Activated CD4-positive, alpha-beta T cell treated with anti-CD3 and anti-CD28 coated beads for 36 hours (primary cell): ENCODE measurements at regions of chr11 and their contacts with region 1.

Region 1: DNA sequence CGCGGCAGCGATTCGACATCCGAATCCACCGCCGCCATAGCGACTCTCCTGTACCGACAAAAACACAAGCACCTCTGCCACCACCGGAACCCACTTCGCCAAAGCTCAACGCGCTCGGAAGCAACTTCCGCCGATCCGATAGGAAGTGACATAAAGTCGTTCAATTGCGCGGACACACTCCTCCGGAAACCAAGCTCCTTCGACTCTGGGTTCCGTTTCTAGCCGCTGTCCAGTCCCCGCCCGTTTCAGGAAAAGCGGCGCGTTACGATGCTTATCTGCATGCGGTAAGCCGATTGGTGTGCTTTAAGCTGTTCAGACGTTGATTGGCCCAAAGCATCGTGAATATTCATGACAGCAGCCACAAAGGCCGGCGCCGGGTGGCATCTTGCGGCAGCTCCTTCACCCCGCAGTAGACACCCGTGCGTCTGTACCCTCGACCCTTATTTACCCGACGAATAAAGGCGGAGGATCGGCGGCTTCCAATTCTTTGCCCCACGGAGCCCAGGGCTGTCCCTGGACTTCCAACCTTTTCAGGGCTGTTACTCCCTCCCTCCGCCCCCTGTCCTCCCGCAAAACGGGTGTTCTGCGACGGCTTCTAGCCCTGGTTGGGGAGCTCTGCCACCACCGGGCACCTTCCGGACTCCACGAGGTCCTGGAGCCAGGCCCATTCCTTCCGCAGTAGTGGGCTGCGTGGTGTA is at the start of gene TUT1:
- DNase-seq: peak; percentile 97
- ATAC-seq: peak; percentile 93
- H3K4me3 Mint-ChIP-seq: peak within 1 kb of the TSS; percentile 99
- H3K27ac Mint-ChIP-seq: peak within 1 kb of the TSS; percentile 99
- H3K4me1 Mint-ChIP-seq: peaks cover 47% of the 10 kb centered on the region
- H3K27me3 Mint-ChIP-seq: no peaks in the 10 kb centered on the region
- total RNA-seq, gene TUT1: 32.5 to 36.0 TPM

Region 2: DNA sequence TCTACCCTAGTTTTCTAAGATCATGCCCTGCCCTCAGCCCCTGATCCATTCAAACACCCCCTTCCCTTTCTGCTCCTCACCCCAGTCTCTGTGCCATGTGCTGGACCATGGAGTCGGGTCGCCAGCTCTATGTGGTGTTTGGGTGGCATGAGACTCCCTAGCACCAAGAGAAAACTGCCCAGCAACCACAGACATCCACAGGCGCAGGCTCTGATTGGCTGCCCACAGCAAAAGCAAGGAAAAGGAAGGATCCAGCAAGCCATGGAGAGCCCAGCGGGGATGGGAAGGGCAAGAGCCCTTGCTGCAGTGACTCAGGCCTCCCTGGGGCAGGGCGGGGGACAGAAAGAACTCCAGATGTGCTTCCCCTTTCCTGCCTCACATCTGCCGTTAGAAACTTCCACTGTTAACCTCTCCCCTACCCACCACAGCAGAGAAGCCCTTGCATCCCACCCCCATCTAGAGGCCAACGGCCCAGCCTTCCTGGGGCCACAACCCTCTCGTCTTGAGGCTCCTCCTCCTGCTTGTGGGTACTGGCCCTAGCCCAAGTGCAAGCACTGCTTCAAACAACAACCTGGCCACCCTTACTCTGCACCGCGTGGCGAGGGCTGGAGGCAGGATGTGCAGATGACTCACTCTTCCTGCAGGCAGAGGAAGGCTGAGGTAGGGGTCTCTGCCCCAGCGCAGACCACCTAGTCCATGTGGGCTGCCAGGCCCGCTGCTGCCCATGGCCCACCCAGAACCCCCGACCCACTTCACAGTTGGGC is 35.3 kb before region 1 on chr11:
- CTCF ChIA-PET with region 1: interaction called, 8 read pairs
- POLR2A ChIA-PET with region 1: interaction called, 15 read pairs
- intact Hi-C with region 1: no loop called
- DNase-seq: peak; percentile 92
- ATAC-seq: peak; percentile 65
- H3K4me3 Mint-ChIP-seq: peak overlapping the region; percentile 54
- H3K27ac Mint-ChIP-seq: peak overlapping the region; percentile 92
- H3K4me1 Mint-ChIP-seq: peaks cover 98% of the 10 kb centered on the region
- H3K27me3 Mint-ChIP-seq: no peaks in the 10 kb centered on the region

Region 3: DNA sequence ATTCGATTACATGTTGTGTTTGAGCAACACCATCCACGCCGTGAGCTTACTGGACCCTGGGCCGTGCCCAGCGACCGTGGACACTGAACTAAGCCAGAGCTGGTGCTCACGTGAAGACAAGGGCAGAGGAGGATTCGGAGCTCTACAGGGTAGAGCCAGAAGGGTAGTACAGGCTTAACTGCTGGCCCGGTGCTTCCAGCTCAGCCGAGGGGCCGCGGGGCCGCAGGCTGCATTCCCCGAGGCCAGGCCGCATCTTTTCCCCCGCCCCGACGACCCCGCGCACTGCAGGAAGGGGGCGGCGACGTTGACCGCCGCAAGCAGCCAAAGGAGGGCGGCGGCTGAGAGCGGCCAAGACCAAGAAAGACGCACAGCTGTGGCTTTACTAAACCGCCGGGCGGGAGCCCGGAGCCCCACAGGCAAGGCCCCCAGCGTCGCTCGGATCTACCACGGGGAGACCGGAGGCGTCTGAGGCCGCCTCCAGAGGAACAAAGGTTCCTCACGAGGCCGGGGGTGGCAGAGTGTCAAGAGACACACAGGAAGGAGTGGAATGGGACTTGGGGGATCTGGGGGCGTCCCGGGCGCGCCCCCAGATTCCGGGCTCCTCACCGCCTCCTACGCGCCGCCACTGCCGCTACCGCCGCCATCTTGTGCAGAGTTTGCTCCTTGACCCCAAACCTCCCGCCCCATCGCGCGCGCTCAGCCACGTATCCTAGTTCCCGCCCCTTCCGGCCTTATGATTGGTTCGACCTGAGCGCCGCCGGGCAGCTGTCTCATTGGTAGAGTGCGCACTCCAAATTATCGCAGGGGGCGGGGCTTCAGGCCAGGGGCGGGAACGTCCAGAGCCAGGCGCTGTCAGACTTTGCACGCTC is 54.6 kb after region 1 on chr11 and contains the start of gene GANAB:
- CTCF ChIA-PET with region 1: interaction called, 5 read pairs
- POLR2A ChIA-PET with region 1: interaction called, 13 read pairs
- intact Hi-C with region 1: loop called in 1 of 2 experiments (anchors 1 kb)
- DNase-seq: peak; percentile 100
- ATAC-seq: peak; percentile 99
- H3K4me3 Mint-ChIP-seq: peak within 1 kb of the TSS; percentile 93
- H3K27ac Mint-ChIP-seq: peak within 1 kb of the TSS; percentile 93
- H3K4me1 Mint-ChIP-seq: peaks cover 34% of the 10 kb centered on the region
- H3K27me3 Mint-ChIP-seq: no peaks in the 10 kb centered on the region
- total RNA-seq, gene GANAB: 208 to 218 TPM

Region 4: DNA sequence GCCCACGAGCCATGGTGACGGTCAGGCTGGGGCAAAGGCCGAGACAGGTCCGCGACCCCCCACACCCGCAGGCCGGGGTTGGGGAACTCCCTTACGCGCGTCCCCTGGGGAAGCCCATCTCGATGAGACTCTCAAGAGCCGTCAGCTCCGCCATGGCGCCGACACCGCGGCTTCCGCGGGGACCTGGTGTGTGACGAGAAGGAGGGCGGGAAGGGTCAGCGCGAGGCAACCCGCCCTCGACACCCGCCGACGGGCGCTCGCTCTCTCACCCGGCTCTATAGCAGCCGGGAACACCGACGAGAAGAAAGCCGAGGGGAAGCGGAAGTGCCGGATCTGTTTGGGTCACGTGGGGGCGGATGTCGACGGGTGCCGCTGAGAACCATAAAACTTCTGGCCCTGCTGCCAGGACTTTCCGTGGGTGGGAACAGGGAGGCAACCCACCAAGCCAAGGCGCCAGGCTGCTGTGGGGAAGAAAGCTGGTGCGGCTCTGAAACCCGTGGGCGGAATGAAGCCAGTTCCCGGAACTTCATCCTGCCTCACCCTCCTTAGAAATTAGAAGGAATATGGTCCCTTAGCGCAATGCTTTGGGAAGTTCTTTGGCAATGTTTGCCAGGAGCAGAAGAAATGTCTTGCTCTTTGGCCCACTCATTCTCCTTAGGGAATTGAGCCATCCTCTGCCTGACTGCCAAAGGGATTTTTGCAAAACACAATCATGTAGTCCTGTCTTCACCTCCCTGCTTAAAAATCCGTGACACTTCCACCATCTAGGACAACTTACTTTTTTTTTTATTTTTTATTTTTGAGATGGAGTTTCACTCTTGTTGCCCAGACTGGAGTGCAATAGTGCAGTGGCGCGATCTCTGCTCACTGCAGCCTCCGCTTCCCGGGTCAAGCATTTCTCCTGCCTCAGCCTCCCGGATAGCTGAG is 87.4 kb after region 1 on chr11 and contains the start of gene UBXN1:
- CTCF ChIA-PET with region 1: interaction called, 14 read pairs
- POLR2A ChIA-PET with region 1: interaction called, 12 read pairs
- intact Hi-C with region 1: loop called (anchors 1 kb)
- DNase-seq: peak; percentile 93
- ATAC-seq: peak; percentile 88
- H3K4me3 Mint-ChIP-seq: peak within 1 kb of the TSS; percentile 82
- H3K27ac Mint-ChIP-seq: peak within 1 kb of the TSS; percentile 92
- H3K4me1 Mint-ChIP-seq: peaks cover 28% of the 10 kb centered on the region
- H3K27me3 Mint-ChIP-seq: no peaks in the 10 kb centered on the region
- total RNA-seq, gene UBXN1: 95.6 to 119 TPM

Region 5: DNA sequence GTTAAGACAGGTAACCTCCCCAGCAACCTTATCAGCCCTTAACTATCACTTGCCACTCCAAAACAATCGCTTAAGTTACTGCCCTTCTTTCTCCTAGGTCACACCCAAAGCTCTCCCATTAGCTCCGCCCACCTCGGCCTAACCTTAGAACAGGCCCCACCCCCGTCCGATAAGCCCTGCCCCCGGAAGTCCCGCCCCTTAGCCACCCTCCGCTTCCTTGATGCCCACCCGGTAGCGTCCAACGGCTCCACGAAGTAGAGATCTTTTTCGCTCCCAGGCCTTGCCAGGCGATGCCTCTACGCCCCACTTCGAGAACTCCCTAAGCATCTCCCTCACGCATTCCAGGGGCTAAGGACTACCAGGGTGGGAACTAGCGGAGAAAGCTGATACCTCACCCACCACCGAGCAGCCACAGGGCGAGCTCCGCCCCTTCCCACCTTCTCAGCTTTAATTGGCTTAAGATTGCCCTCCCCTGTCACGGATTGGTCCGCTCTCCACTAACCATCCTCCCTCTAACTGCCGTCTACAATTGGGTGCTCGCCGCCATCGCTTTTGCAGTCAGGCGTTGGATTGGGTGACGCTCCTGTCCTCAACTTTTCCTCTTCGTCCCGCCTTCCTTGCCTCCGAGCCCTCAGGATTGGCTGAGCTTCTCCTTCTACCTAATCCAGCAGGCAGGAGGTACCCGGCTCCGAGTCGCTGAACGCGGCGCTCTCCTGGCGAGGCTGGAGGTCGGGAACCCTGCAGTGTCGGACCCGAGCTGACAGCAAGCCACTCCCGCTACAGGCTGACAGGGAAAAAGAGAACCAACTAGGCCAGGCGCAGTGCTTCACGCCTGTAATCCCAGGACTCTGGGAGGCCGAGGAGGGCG is 162.4 kb after region 1 on chr11 and contains the start of gene ZBTB3:
- CTCF ChIA-PET with region 1: interaction called, 3 read pairs
- POLR2A ChIA-PET with region 1: interaction called, 18 read pairs
- intact Hi-C with region 1: no loop called
- DNase-seq: peak; percentile 98
- ATAC-seq: peak; percentile 98
- H3K4me3 Mint-ChIP-seq: peak within 1 kb of the TSS; percentile 96
- H3K27ac Mint-ChIP-seq: peak within 1 kb of the TSS; percentile 97
- H3K4me1 Mint-ChIP-seq: peaks cover 26% of the 10 kb centered on the region
- H3K27me3 Mint-ChIP-seq: no peaks in the 10 kb centered on the region
- total RNA-seq, gene ZBTB3: 6.0 to 10.2 TPM

Region 6: DNA sequence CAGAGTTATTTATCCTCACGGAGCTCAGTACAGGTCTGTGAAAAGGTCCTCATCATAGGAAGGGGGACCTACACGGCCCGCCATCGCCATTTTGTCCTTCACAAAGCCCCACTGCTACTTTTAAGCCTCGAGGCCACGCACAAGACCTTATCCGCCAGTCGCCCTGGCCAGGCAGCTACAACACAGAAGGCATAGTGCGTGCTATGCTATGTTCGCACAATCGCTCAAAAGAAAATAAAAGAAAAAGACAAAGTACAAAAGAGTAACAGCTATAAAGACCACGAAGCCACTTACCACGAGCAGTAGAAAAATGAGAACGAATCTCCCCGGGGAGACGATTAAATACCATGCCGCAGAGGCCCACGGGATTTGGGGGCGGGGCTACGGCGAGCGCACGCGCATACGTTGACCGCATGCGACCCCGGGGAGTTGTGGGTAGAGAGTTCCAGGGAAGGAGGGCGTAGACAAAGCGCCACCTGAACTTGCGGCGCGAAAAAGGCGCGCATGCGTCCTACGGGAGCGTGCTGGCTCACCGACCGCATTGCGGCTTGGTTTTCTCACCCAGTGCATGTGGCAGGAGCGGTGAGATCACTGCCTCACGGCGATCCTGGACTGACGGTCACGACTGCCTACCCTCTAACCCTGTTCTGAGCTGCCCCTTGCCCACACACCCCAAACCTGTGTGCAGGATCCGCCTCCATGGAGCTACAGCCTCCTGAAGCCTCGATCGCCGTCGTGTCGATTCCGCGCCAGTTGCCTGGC is 264.2 kb after region 1 on chr11:
- CTCF ChIA-PET with region 1: no interaction called
- POLR2A ChIA-PET with region 1: interaction called, 12 read pairs
- intact Hi-C with region 1: loop called in 1 of 2 experiments (anchors 5 kb)
- DNase-seq: peak; percentile 99
- ATAC-seq: peak; percentile 83
- H3K4me3 Mint-ChIP-seq: peak overlapping the region; percentile 99
- H3K27ac Mint-ChIP-seq: peak overlapping the region; percentile 97
- H3K4me1 Mint-ChIP-seq: peaks cover 53% of the 10 kb centered on the region
- H3K27me3 Mint-ChIP-seq: no peaks in the 10 kb centered on the region

Region 7: DNA sequence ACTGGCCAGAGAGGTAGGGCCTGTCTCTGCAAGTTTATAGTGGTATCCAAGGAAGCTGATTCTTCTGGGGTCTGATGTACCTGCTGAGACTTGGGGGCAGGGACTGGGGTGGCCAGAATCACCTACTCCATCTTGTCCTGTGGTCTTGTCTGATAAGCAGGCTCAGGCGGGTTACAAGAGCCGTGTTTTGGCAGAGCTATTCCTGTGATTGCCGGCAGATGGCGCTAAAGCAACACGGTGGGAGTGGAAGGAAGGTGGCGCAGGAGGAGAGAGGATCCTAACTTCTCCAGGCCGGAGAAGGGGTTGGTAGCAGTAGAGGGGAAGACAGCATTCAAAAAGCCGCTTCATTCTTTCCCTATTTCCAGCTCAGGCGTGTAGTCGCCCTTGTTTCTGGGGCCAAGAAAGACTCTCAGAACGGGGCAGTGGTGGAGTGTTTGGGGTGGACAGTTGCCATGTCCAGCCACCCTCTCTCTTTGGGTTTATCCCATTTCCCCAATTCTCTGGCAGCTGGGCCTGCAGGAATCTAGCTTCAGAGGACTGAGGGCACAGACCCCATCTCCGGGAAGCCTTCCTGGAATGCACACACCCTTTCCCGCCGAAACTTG is 314.4 kb after region 1 on chr11:
- CTCF ChIA-PET with region 1: no interaction called
- POLR2A ChIA-PET with region 1: no interaction called
- intact Hi-C with region 1: no loop called
- DNase-seq: peak; percentile 88
- ATAC-seq: peak; percentile 82
- H3K4me3 Mint-ChIP-seq: no peak overlapping the region
- H3K27ac Mint-ChIP-seq: no peak overlapping the region
- H3K4me1 Mint-ChIP-seq: peaks cover 22% of the 10 kb centered on the region
- H3K27me3 Mint-ChIP-seq: peaks cover 8% of the 10 kb centered on the region